CD8-positive, alpha-beta T cell (primary cell): ENCODE measurements at regions of chr5 and their contacts with region 1.

Region 1: DNA sequence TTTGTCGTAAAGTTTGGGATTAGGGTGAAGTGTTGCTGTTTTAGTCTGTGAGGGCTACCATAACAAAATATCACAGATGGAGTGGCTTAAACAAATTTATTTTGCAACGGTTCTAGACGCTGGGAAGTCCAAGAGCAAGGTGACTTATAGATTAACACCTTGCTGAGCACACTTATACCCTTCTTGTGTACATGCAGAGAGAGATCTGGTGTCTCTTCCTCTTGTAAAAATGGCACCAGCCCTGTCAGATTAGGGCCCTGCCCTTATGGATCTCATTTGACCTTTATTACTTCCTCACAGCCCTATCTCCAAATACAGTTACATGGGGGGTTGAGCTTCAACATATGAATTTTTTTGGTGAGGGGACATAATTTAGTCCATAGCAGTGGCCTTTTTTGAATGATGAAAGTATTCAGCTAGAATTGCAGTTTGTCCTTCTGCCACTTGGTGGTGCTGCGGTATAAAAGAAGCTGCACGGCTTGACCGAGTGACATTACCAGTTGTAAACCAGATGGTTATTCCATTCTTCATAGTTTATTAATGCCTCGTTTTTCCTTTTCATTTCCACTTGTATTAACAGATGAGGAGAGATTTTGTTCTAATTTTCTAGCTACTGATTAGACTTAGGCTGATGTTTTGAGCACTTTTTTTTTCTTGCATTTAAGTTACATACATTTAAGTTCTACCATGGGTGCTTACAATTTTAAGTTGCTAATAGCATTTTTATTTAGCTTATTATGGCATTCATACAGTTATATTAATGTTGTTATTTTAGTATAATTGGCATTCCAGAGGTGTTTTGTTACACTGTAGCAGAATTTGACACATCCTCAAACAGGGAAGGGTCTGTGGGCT is 19.4 kb downstream of the DCP2 start:
- DNase-seq: peak; percentile 64 to 85 (median 78)
- ATAC-seq: peak; percentile 94
- H3K4me3 ChIP-seq: no peak overlapping the region
- H3K4me3 Mint-ChIP-seq: no peak overlapping the region
- H3K27ac ChIP-seq: no peak overlapping the region
- H3K27ac Mint-ChIP-seq: no peak overlapping the region
- H3K4me1 ChIP-seq: no peaks in the 10 kb centered on the region
- H3K4me1 Mint-ChIP-seq: peaks cover 32% of the 10 kb centered on the region
- H3K27me3 ChIP-seq: no peaks in the 10 kb centered on the region
- H3K27me3 Mint-ChIP-seq: no peaks in the 10 kb centered on the region
- CTCF ChIP-seq: peak; percentile 99

Region 2: GRCh38 chr5:112976432-112977309 is 19.3 kb before region 1 on chr5 and contains the start of gene DCP2:
- CTCF ChIA-PET with region 1: interaction called, 22 read pairs
- POLR2A ChIA-PET with region 1: interaction called, 3 read pairs
- intact Hi-C with region 1: loop called in 1 of 2 experiments (anchors 2 kb)
- DNase-seq: peak; percentile 88 to 99 (median 95)
- ATAC-seq: peak; percentile 96
- H3K4me3 ChIP-seq: peak within 1 kb of the TSS; percentile 57 to 98
- H3K4me3 Mint-ChIP-seq: peak within 1 kb of the TSS; percentile 100
- H3K27ac ChIP-seq: peak within 1 kb of the TSS; percentile 81
- H3K27ac Mint-ChIP-seq: peak within 1 kb of the TSS; percentile 97
- H3K4me1 ChIP-seq: peaks cover 24% of the 10 kb centered on the region
- H3K4me1 Mint-ChIP-seq: peaks cover 43% of the 10 kb centered on the region
- H3K27me3 ChIP-seq: no peaks in the 10 kb centered on the region
- H3K27me3 Mint-ChIP-seq: no peaks in the 10 kb centered on the region
- CTCF ChIP-seq: no peak
- total RNA-seq, gene DCP2: 65.4 to 69.8 TPM

Region 3: GRCh38 chr5:113043491-113043931 is 47.5 kb after region 1 on chr5:
- CTCF ChIA-PET with region 1: interaction called, 18 read pairs
- POLR2A ChIA-PET with region 1: no interaction called
- intact Hi-C with region 1: loop called in 1 of 2 experiments (anchors 5 kb)
- DNase-seq: peak in 6 of 9 experiments; percentile 16 to 71 (median 40)
- ATAC-seq: no peak
- H3K4me3 ChIP-seq: no peak overlapping the region
- H3K4me3 Mint-ChIP-seq: no peak overlapping the region
- H3K27ac ChIP-seq: no peak overlapping the region
- H3K27ac Mint-ChIP-seq: no peak overlapping the region
- H3K4me1 ChIP-seq: no peaks in the 10 kb centered on the region
- H3K4me1 Mint-ChIP-seq: peaks cover 5% of the 10 kb centered on the region
- H3K27me3 ChIP-seq: no peaks in the 10 kb centered on the region
- H3K27me3 Mint-ChIP-seq: no peaks in the 10 kb centered on the region
- CTCF ChIP-seq: peak; percentile 24

Region 4: DNA sequence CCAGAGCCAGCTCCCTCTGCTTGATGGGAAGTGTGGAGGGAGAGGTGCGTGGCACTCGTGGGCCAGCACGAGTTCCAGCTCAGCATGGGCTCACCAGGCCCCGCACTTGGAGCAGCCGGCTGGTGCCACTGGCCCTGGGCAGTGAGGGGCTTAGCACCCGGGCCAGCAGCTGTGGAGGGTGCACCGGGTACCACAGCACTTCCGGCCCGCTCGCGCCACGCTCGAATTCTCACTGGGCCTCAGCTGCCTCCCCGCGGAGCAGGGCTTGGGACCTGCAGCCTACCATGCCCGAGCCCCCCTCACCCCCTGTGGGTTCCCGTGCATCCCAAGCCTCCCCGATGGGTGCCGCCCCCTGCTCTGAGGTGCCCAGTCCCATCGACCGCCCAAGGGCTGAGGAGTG is 79.0 kb after region 1 on chr5:
- CTCF ChIA-PET with region 1: interaction called, 33 read pairs
- POLR2A ChIA-PET with region 1: interaction called, 3 read pairs
- intact Hi-C with region 1: no loop called
- DNase-seq: no peak
- ATAC-seq: no peak
- H3K4me3 ChIP-seq: no peak overlapping the region
- H3K4me3 Mint-ChIP-seq: no peak overlapping the region
- H3K27ac ChIP-seq: no peak overlapping the region
- H3K27ac Mint-ChIP-seq: no peak overlapping the region
- H3K4me1 ChIP-seq: peaks cover 26% of the 10 kb centered on the region
- H3K4me1 Mint-ChIP-seq: peaks cover 45% of the 10 kb centered on the region
- H3K27me3 ChIP-seq: no peaks in the 10 kb centered on the region
- H3K27me3 Mint-ChIP-seq: no peaks in the 10 kb centered on the region
- CTCF ChIP-seq: no peak

Region 5: DNA sequence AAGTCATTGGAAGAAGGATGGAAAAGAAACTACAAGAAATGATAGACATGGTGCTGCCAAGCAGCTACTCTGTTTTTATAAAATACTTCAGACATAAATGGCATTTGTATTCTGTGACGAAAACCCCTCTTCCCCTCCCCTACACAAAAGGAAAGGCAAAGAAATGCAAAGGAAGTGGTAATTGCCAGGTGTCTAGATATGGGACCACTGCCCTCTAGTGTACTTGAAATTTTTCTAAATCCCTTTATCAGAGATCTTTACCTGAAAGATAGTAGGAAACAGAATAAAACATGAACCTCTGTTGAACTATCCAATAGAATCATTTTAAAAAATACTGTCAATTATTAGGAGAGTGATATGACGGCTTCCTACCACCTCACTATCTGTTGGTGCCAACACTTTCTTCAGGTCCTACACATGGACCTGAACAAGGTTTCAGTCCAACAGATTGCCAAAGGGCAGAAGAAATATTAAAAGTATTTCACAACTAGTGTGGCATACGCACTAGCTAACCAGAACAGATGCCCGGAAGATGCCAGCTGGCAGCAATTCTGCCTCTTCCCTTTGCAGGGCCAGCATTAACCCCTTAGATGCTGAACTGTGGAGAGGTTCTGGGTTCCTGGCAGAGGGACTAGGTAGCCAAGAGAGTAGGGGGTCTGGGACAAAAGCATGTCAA is 334.7 kb after region 1 on chr5:
- CTCF ChIA-PET with region 1: interaction called, 153 read pairs
- POLR2A ChIA-PET with region 1: interaction called, 6 read pairs
- intact Hi-C with region 1: loop called (anchors 1 kb)
- DNase-seq: peak in 3 of 9 experiments; percentile 9 to 81 (median 66)
- ATAC-seq: peak; percentile 83
- H3K4me3 ChIP-seq: no peak overlapping the region
- H3K4me3 Mint-ChIP-seq: peak overlapping the region; percentile 35
- H3K27ac ChIP-seq: no peak overlapping the region
- H3K27ac Mint-ChIP-seq: peak overlapping the region; percentile 12
- H3K4me1 ChIP-seq: peaks cover 7% of the 10 kb centered on the region
- H3K4me1 Mint-ChIP-seq: peaks cover 19% of the 10 kb centered on the region
- H3K27me3 ChIP-seq: no peaks in the 10 kb centered on the region
- H3K27me3 Mint-ChIP-seq: peaks cover 2% of the 10 kb centered on the region
- CTCF ChIP-seq: peak; percentile 58